Activated naive CD4-positive, alpha-beta T cell treated with anti-CD3 and anti-CD28 coated beads for 36 hours (primary cell): ENCODE measurements at regions of chr10 and their contacts with region 1.

Region 1: GRCh38 chr10:112389147-112389822 is 15.4 kb downstream of the ACSL5 start:
- DNase-seq: peak; percentile 90
- H3K4me3 Mint-ChIP-seq: peak overlapping the region; percentile 32
- H3K27ac Mint-ChIP-seq: peak overlapping the region; percentile 85
- H3K4me1 Mint-ChIP-seq: peaks cover 70% of the 10 kb centered on the region
- H3K27me3 Mint-ChIP-seq: no peaks in the 10 kb centered on the region

Region 2: DNA sequence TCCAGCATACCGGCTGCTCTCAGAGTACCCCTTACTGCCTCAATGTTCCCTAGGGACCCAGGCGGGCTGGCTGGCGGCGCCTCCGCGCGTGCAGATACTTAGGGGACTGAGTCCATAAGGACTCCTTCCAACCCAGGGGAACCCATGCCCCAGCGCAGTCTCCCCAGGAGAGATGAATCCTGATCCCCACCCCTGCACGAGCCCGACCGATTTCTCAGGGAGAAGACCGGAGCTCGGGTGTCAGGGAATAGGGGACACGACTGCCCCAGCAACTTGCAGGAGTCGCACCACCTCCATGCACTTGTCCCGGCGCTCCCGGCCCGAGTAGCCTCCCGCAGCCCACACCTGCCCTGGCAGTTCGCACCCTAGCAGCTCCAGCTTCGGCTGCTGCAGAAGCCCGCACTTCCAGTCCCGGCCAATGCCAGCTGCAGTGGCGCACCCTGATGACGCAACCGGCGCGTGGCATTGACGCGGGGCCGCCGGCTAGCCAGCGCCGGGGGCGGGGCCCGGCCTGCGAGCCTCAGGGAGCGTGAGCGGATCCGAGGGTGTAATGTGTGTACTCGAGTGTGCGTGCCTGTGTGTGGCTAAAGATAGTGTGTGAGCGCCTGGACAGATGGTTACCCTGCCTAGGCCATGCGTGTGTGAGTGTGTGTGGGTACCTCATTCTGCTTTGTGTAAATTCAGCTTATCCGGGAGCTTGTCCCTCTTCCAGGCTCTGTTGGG is 205.8 kb before region 1 on chr10 and contains the start of gene GPAM:
- CTCF ChIA-PET with region 1: no interaction called
- intact Hi-C with region 1: loop called (anchors 1 kb)
- DNase-seq: peak; percentile 97
- H3K4me3 Mint-ChIP-seq: peak within 1 kb of the TSS; percentile 85
- H3K27ac Mint-ChIP-seq: peak within 1 kb of the TSS; percentile 74
- H3K4me1 Mint-ChIP-seq: peaks cover 20% of the 10 kb centered on the region
- H3K27me3 Mint-ChIP-seq: no peaks in the 10 kb centered on the region
- total RNA-seq, gene GPAM: 7.3 to 8.1 TPM

Region 3: GRCh38 chr10:112446855-112447711 is 57.8 kb after region 1 on chr10 and contains the starts of genes VTI1A and ZDHHC6:
- CTCF ChIA-PET with region 1: interaction called, 3 read pairs
- intact Hi-C with region 1: loop called (anchors 2 kb)
- DNase-seq: peak; percentile 89
- H3K4me3 Mint-ChIP-seq: peak within 1 kb of the TSS; percentile 84
- H3K27ac Mint-ChIP-seq: peak within 1 kb of the TSS; percentile 86
- H3K4me1 Mint-ChIP-seq: peaks cover 57% of the 10 kb centered on the region
- H3K27me3 Mint-ChIP-seq: no peaks in the 10 kb centered on the region
- total RNA-seq, gene VTI1A: 24.9 to 28.4 TPM
- total RNA-seq, gene ZDHHC6: 37.8 to 39.0 TPM

Region 4: DNA sequence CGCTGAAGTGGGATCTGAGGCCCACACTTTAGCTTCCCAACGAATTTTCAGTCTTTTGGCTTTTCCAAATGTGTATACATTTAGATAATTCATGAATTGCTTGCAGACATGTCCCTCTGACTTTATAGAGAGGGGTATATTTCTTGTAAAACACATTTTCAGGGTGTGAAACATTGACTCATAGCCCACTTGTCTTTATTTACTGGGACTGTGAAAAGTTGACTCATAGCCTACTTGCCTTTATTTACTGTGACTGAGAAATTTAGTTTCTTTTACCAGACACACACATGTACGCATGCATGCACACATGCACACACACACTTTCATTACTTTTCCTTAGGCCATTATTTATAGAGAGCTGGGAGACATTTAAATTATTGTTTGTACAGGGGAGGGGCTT is 136.9 kb after region 1 on chr10:
- CTCF ChIA-PET with region 1: no interaction called
- intact Hi-C with region 1: loop called (anchors 5 kb)
- DNase-seq: no peak
- H3K4me3 Mint-ChIP-seq: no peak overlapping the region
- H3K27ac Mint-ChIP-seq: no peak overlapping the region
- H3K4me1 Mint-ChIP-seq: peaks cover 34% of the 10 kb centered on the region
- H3K27me3 Mint-ChIP-seq: no peaks in the 10 kb centered on the region

Region 5: DNA sequence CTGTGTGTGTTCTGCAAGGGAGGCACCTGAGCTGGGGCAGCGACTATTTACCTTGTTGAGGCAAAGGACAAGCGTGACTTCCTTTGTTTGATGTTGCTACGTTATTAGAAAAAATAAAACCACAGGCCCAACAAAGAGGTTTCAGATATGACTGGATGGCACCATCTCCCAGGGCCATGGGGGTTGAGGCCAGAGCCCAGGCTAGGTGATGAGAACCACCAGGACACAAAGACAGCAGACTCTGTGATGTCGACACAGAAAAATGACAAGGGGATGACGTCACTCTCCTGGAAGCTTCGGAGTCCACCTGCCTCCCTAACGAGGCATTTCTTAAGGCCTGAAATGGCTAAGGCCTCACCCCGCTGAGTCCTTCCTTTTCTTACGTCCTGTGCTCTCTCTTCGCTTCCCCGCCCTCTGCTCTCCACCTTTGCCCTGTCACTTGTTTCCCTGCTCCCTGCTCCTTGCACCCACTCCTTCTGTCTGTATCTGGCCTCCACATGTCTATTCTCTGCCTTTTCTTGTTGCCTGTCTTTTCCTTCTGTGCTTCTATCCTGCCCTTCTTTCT is 1571.4 kb after region 1 on chr10:
- CTCF ChIA-PET with region 1: no interaction called
- intact Hi-C with region 1: loop called (anchors 5 kb)
- DNase-seq: peak; percentile 39
- H3K4me3 Mint-ChIP-seq: no peak overlapping the region
- H3K27ac Mint-ChIP-seq: no peak overlapping the region
- H3K4me1 Mint-ChIP-seq: peaks cover 37% of the 10 kb centered on the region
- H3K27me3 Mint-ChIP-seq: peaks cover 7% of the 10 kb centered on the region